ENCODE measurements at regions of chr5 and their contacts with region 1.

Region 1: GRCh38 chr5:154189819-154190594 is 526 bp upstream of the GALNT10 start:
- DNase-seq: peak; percentile 60 to 86
- H3K4me3 ChIP-seq: peak overlapping the region; percentile 73
- H3K27ac ChIP-seq: peak overlapping the region; percentile 56; the same call in 1 of the 2 replicates
- H3K4me1 ChIP-seq: peaks cover 44% of the 10 kb centered on the region
- H3K27me3 ChIP-seq: no peaks in the 10 kb centered on the region
- CTCF ChIP-seq: peak; percentile 54; the same call in 1 of the 2 replicates

Region 2: GRCh38 chr5:153749960-153750359 is 440.0 kb before region 1 on chr5:
- CTCF ChIA-PET with region 1: no interaction called
- POLR2A ChIA-PET with region 1: no interaction called
- intact Hi-C with region 1: no loop called
- DNase-seq: no peak
- H3K4me3 ChIP-seq: no peak overlapping the region
- H3K27ac ChIP-seq: no peak overlapping the region
- H3K4me1 ChIP-seq: no peaks in the 10 kb centered on the region
- H3K27me3 ChIP-seq: peaks cover 8% of the 10 kb centered on the region; the same call in 1 of the 2 replicates
- CTCF ChIP-seq: no peak

Region 3: GRCh38 chr5:154092356-154093141 is 97.5 kb before region 1 on chr5:
- CTCF ChIA-PET with region 1: interaction called, 13 read pairs
- POLR2A ChIA-PET with region 1: interaction called, 9 read pairs
- intact Hi-C with region 1: no loop called
- DNase-seq: peak; percentile 56 to 83
- H3K4me3 ChIP-seq: no peak overlapping the region
- H3K27ac ChIP-seq: peak overlapping the region; percentile 33; the same call in 1 of the 2 replicates
- H3K4me1 ChIP-seq: peaks cover 37% of the 10 kb centered on the region
- H3K27me3 ChIP-seq: no peaks in the 10 kb centered on the region
- CTCF ChIP-seq: no peak

Region 4: GRCh38 chr5:154221371-154221896 is 31.4 kb after region 1 on chr5:
- CTCF ChIA-PET with region 1: interaction called, 12 read pairs
- POLR2A ChIA-PET with region 1: no interaction called
- intact Hi-C with region 1: loop called (anchors 2 kb)
- DNase-seq: peak; percentile 78 to 95
- H3K4me3 ChIP-seq: peak overlapping the region; percentile 17; the same call in 1 of the 2 replicates
- H3K27ac ChIP-seq: peak overlapping the region; percentile 91
- H3K4me1 ChIP-seq: peaks cover 50% of the 10 kb centered on the region
- H3K27me3 ChIP-seq: no peaks in the 10 kb centered on the region
- CTCF ChIP-seq: no peak

Region 5: GRCh38 chr5:154287136-154287535 is 97.1 kb after region 1 on chr5:
- CTCF ChIA-PET with region 1: no interaction called
- POLR2A ChIA-PET with region 1: no interaction called
- intact Hi-C with region 1: loop called (anchors 2 kb)
- DNase-seq: peak; percentile 65 to 93
- H3K4me3 ChIP-seq: peak overlapping the region; percentile 27; the same call in 1 of the 2 replicates
- H3K27ac ChIP-seq: peak overlapping the region; percentile 71
- H3K4me1 ChIP-seq: peaks cover 64% of the 10 kb centered on the region
- H3K27me3 ChIP-seq: no peaks in the 10 kb centered on the region
- CTCF ChIP-seq: no peak

Region 6: DNA sequence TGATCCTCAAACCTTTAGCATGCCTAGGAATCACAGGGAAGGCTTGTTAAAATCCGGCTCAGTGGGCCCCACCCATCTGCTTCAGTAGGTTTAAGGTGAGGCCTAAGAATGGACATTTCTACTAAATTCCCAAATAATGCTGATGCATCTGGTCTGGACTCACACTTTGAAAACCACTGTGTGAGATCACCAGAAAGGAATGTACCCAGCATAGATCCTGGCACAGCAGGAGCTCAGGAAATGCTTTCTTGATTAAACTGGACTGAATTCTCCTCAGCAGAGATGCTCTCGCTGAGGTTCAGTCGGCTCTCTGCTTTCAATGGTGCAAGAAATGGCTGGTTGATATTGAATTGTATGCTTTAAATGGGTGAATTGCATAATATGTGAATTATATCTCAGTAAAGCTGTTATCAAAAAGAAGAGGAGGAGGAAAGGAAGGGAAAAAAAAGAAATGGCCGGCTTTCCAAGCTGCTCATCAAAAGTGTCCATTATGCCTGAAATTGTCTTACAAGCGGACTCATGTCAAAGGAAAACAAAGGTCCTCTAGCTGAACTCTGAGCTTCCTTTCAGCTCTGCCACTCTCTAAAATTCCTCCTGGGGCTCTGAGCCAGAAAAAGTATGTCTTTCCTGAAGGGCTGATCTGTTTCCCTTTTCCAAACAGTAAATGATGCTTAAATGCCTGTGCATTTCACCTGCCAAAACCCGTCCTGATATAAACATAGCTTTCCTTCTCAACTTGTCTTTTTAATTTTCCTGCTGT is 178.2 kb after region 1 on chr5:
- CTCF ChIA-PET with region 1: no interaction called
- POLR2A ChIA-PET with region 1: interaction called, 3 read pairs
- intact Hi-C with region 1: loop called (anchors 2 kb)
- DNase-seq: peak; percentile 76 to 96
- H3K4me3 ChIP-seq: peak overlapping the region; percentile 34; the same call in 1 of the 2 replicates
- H3K27ac ChIP-seq: peak overlapping the region; percentile 98
- H3K4me1 ChIP-seq: peaks cover 69% of the 10 kb centered on the region
- H3K27me3 ChIP-seq: no peaks in the 10 kb centered on the region
- CTCF ChIP-seq: no peak

Region 7: GRCh38 chr5:154395407-154396258 is 205.6 kb after region 1 on chr5:
- CTCF ChIA-PET with region 1: no interaction called
- POLR2A ChIA-PET with region 1: no interaction called
- intact Hi-C with region 1: loop called (anchors 2 kb)
- DNase-seq: peak; percentile 83 to 90
- H3K4me3 ChIP-seq: no peak overlapping the region
- H3K27ac ChIP-seq: peak overlapping the region; percentile 85
- H3K4me1 ChIP-seq: peaks cover 34% of the 10 kb centered on the region
- H3K27me3 ChIP-seq: no peaks in the 10 kb centered on the region
- CTCF ChIP-seq: no peak

Region 8: GRCh38 chr5:154610321-154611154 is 420.5 kb after region 1 on chr5:
- CTCF ChIA-PET with region 1: no interaction called
- POLR2A ChIA-PET with region 1: no interaction called
- intact Hi-C with region 1: loop called (anchors 10 kb)
- DNase-seq: peak; percentile 66 to 85
- H3K4me3 ChIP-seq: peak overlapping the region; percentile 45; the same call in 1 of the 2 replicates
- H3K27ac ChIP-seq: no peak overlapping the region
- H3K4me1 ChIP-seq: peaks cover 14% of the 10 kb centered on the region; the same call in 1 of the 2 replicates
- H3K27me3 ChIP-seq: no peaks in the 10 kb centered on the region
- CTCF ChIP-seq: peak; percentile 93

Measured in PC-9 (cell line).